H1 (cell line): ENCODE measurements at regions of chr11 and their contacts with region 1.

Region 1: GRCh38 chr11:134725716-134726639 is 313.9 kb upstream of the B3GAT1 start:
- DNase-seq: no peak
- H3K4me3 ChIP-seq: no peak overlapping the region
- H3K27ac ChIP-seq: no peak overlapping the region
- H3K4me1 ChIP-seq: peaks cover 7 to 13% (median 10%) of the 10 kb centered on the region in 4 experiments
- H3K27me3 ChIP-seq: no peaks in the 10 kb centered on the region
- CTCF ChIP-seq: peak; percentile 50 to 68 (median 64); a peak in 3 of 4 replicates
- EP300 ChIP-seq: no peak
- POLR2A ChIP-seq: no peak
- RAD21 ChIP-seq: peak; percentile 35 to 53; a peak in 3 of 4 replicates

Region 2: GRCh38 chr11:134466156-134466555 is 259.8 kb before region 1 on chr11:
- CTCF ChIA-PET with region 1: no interaction called
- POLR2A ChIA-PET with region 1: no interaction called
- DNase-seq: peak in 1 of 2 experiments; percentile 55
- H3K4me3 ChIP-seq: no peak overlapping the region
- H3K27ac ChIP-seq: no peak overlapping the region
- H3K4me1 ChIP-seq: peaks cover 0 to 4% (median 1%) of the 10 kb centered on the region in 4 experiments; a peak in 4 of 7 replicates
- H3K27me3 ChIP-seq: peaks cover 0 to 7% (median 6%) of the 10 kb centered on the region in 4 experiments; a peak in 4 of 7 replicates
- CTCF ChIP-seq: no peak
- EP300 ChIP-seq: no peak
- POLR2A ChIP-seq: no peak
- RAD21 ChIP-seq: no peak

Region 3: DNA sequence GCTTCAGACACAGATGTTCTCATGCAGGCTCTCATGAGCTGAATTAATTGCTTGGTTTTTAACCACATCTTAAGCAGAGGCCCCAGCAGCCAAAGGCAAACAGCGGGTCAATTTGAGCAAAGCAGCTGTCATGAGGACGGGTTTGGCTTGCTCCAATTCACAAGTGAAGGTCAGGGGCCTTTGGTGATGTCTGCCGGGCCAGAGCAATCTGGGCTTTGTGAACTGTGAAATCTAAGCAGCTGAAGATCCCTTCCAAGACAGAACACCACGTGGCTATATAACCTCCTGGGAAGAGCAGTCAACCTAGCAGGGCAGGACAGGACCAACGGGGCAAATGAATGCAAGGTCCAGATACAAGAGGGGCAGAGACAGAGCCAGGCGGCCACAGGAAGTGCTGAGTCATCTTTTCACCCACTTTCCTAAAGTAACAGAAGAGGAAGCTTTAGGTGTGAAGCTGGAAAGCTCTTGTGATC is 126.6 kb before region 1 on chr11:
- CTCF ChIA-PET with region 1: interaction called, 10 read pairs
- POLR2A ChIA-PET with region 1: no interaction called
- DNase-seq: peak in 1 of 2 experiments; percentile 30
- H3K4me3 ChIP-seq: no peak overlapping the region
- H3K27ac ChIP-seq: no peak overlapping the region
- H3K4me1 ChIP-seq: no peaks in the 10 kb centered on the region
- H3K27me3 ChIP-seq: peaks cover 0 to 2% (median 0%) of the 10 kb centered on the region in 4 experiments; a peak in 1 of 7 replicates
- CTCF ChIP-seq: no peak
- EP300 ChIP-seq: no peak
- POLR2A ChIP-seq: no peak
- RAD21 ChIP-seq: no peak

Region 4: DNA sequence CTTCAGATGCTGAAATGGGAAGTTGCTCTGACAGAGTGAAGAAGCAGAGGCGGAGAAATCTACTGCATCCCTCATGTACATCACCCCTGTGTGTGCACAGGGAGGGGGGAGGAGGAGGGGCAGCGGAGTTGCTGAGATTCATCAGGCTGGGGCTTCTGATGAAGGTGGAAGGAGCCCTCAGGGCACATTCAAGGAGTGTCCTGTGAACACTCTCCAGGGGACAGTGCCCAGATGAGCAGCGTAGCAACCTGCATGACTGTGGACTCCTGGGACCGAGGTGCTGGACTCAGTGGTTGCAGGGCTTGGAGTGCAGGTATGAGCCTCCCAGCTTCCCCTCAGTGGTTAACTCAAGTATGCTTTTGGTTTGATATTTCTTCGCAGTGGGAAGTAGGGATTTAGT is 56.2 kb before region 1 on chr11:
- CTCF ChIA-PET with region 1: interaction called, 10 read pairs
- POLR2A ChIA-PET with region 1: no interaction called
- DNase-seq: no peak
- H3K4me3 ChIP-seq: no peak overlapping the region
- H3K27ac ChIP-seq: no peak overlapping the region
- H3K4me1 ChIP-seq: peaks cover 0 to 3% (median 1%) of the 10 kb centered on the region in 4 experiments; a peak in 3 of 7 replicates
- H3K27me3 ChIP-seq: no peaks in the 10 kb centered on the region; a peak in 3 of 7 replicates
- CTCF ChIP-seq: no peak
- EP300 ChIP-seq: no peak
- POLR2A ChIP-seq: no peak
- RAD21 ChIP-seq: no peak

Region 5: GRCh38 chr11:134714021-134714656 is 11.8 kb before region 1 on chr11:
- CTCF ChIA-PET with region 1: interaction called, 28 read pairs
- POLR2A ChIA-PET with region 1: interaction called, 4 read pairs
- DNase-seq: no peak
- H3K4me3 ChIP-seq: no peak overlapping the region
- H3K27ac ChIP-seq: no peak overlapping the region
- H3K4me1 ChIP-seq: no peaks in the 10 kb centered on the region
- H3K27me3 ChIP-seq: peaks cover 0 to 2% (median under 1%) of the 10 kb centered on the region in 4 experiments; a peak in 3 of 7 replicates
- CTCF ChIP-seq: no peak
- EP300 ChIP-seq: no peak
- POLR2A ChIP-seq: no peak
- RAD21 ChIP-seq: no peak